CD8-positive, alpha-beta T cell (primary cell): ENCODE measurements at regions of chr5 and their contacts with region 1.

Region 1: GRCh38 chr5:94632024-94632423 is 13.6 kb downstream of the SLF1 start:
- DNase-seq: no peak
- ATAC-seq: no peak
- H3K4me3 ChIP-seq: no peak overlapping the region
- H3K4me3 Mint-ChIP-seq: no peak overlapping the region
- H3K27ac ChIP-seq: no peak overlapping the region
- H3K27ac Mint-ChIP-seq: no peak overlapping the region
- H3K4me1 ChIP-seq: no peaks in the 10 kb centered on the region
- H3K4me1 Mint-ChIP-seq: peaks cover 26% of the 10 kb centered on the region
- H3K27me3 ChIP-seq: no peaks in the 10 kb centered on the region
- H3K27me3 Mint-ChIP-seq: no peaks in the 10 kb centered on the region
- CTCF ChIP-seq: no peak

Region 2: DNA sequence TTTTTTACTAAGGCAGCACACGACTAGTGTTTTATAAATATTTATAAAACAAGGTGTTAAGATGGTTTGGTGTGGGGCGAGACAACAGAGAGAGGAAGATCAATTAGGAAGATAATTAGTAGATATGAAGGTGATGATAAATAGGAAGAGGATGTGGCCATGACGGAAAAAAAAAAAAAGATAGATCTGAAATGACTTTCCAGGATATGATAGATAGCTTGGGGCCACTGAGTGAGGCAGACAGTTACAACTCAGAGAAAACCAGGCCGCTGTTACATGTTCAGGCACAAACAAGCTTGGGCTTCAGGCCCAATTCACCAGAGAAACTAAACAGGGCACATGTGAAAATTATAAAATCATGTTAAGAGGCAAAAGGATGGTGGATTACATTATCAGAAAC is 56.8 kb before region 1 on chr5:
- CTCF ChIA-PET with region 1: no interaction called
- POLR2A ChIA-PET with region 1: no interaction called
- intact Hi-C with region 1: no loop called
- DNase-seq: peak in 2 of 9 experiments; percentile 26 to 60
- ATAC-seq: peak; percentile 51
- H3K4me3 ChIP-seq: no peak overlapping the region
- H3K4me3 Mint-ChIP-seq: no peak overlapping the region
- H3K27ac ChIP-seq: peak overlapping the region in 1 of 2 experiments; percentile 59
- H3K27ac Mint-ChIP-seq: peak overlapping the region; percentile 63
- H3K4me1 ChIP-seq: peaks cover 19% of the 10 kb centered on the region
- H3K4me1 Mint-ChIP-seq: peaks cover 38% of the 10 kb centered on the region
- H3K27me3 ChIP-seq: no peaks in the 10 kb centered on the region
- H3K27me3 Mint-ChIP-seq: no peaks in the 10 kb centered on the region
- CTCF ChIP-seq: no peak

Region 3: GRCh38 chr5:94674490-94675382 is 42.7 kb after region 1 on chr5:
- CTCF ChIA-PET with region 1: no interaction called
- POLR2A ChIA-PET with region 1: no interaction called
- intact Hi-C with region 1: loop called in 1 of 2 experiments (anchors 5 kb)
- DNase-seq: no peak
- ATAC-seq: no peak
- H3K4me3 ChIP-seq: no peak overlapping the region
- H3K4me3 Mint-ChIP-seq: no peak overlapping the region
- H3K27ac ChIP-seq: no peak overlapping the region
- H3K27ac Mint-ChIP-seq: no peak overlapping the region
- H3K4me1 ChIP-seq: no peaks in the 10 kb centered on the region
- H3K4me1 Mint-ChIP-seq: no peaks in the 10 kb centered on the region
- H3K27me3 ChIP-seq: no peaks in the 10 kb centered on the region
- H3K27me3 Mint-ChIP-seq: no peaks in the 10 kb centered on the region
- CTCF ChIP-seq: no peak